ENCODE measurements at regions of chr3 and their contacts with region 1.

Region 1: GRCh38 chr3:48400824-48401433 is 28.9 kb downstream of the FBXW12 start:
- DNase-seq: peak; percentile 90
- H3K4me3 Mint-ChIP-seq: peak overlapping the region; percentile 46
- H3K27ac Mint-ChIP-seq: peak overlapping the region; percentile 95
- H3K4me1 Mint-ChIP-seq: peaks cover 34% of the 10 kb centered on the region
- H3K27me3 Mint-ChIP-seq: no peaks in the 10 kb centered on the region
- CTCF ChIP-seq: peak; percentile 96

Region 2: DNA sequence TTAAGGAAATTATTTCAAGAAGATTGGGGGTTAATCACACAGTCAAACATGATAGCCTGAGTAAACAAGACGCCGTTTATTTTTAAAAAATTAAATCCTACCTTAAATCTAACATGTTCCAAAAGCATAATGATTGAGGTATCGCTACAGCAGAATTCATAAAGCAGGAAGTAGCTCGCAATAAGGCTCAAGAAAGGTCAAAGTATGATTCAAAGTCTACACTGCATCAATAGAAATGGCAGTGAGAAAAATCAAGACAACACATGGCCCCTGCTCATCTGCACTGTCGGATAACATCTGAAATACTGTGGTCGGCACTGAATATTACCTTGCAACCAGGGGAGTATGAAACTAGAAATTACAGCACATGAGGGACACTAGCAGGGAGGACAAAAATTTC is 712.4 kb before region 1 on chr3:
- CTCF ChIA-PET with region 1: no interaction called
- POLR2A ChIA-PET with region 1: no interaction called
- intact Hi-C with region 1: no loop called
- DNase-seq: no peak
- H3K4me3 Mint-ChIP-seq: no peak overlapping the region
- H3K27ac Mint-ChIP-seq: no peak overlapping the region
- H3K4me1 Mint-ChIP-seq: no peaks in the 10 kb centered on the region
- H3K27me3 Mint-ChIP-seq: no peaks in the 10 kb centered on the region
- CTCF ChIP-seq: no peak

Region 3: DNA sequence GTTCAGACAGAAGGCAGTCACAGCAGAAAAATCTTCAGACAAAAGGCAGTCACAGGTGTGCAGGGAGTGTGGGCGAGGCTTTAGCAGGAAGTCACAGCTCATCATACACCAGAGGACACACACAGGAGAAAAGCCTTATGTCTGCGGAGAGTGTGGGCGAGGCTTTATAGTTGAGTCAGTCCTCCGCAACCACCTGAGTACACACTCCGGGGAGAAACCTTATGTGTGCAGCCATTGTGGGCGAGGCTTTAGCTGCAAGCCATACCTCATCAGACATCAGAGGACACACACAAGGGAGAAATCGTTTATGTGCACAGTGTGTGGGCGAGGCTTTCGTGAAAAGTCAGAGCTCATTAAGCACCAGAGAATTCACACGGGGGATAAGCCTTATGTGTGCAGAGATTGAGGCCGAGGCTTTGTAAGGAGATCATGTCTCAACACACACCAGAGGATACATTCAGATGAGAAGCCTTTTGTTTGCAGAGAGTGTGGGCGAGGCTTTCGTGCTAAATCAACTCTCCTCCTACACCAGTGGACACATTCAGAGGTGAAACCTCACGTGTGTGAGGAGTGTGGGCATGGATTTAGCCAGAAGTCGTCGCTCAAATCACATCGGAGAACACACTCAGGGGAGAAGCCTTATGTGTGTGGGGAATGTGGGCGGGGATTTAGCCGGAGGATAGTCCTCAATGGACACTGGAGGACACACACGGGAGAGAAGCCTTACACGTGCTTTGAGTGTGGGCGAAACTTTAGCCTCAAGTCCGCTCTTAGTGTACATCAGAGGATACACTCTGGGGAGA is 132.3 kb before region 1 on chr3:
- CTCF ChIA-PET with region 1: interaction called, 20 read pairs
- POLR2A ChIA-PET with region 1: interaction called, 11 read pairs
- intact Hi-C with region 1: loop called (anchors 2 kb)
- DNase-seq: peak; percentile 86
- H3K4me3 Mint-ChIP-seq: peak overlapping the region; percentile 69
- H3K27ac Mint-ChIP-seq: peak overlapping the region; percentile 83
- H3K4me1 Mint-ChIP-seq: peaks cover 29% of the 10 kb centered on the region
- H3K27me3 Mint-ChIP-seq: no peaks in the 10 kb centered on the region
- CTCF ChIP-seq: no peak

Region 4: GRCh38 chr3:48285132-48285531 is 115.8 kb before region 1 on chr3:
- CTCF ChIA-PET with region 1: interaction called, 10 read pairs
- POLR2A ChIA-PET with region 1: interaction called, 4 read pairs
- intact Hi-C with region 1: no loop called
- DNase-seq: no peak
- H3K4me3 Mint-ChIP-seq: no peak overlapping the region
- H3K27ac Mint-ChIP-seq: no peak overlapping the region
- H3K4me1 Mint-ChIP-seq: no peaks in the 10 kb centered on the region
- H3K27me3 Mint-ChIP-seq: no peaks in the 10 kb centered on the region
- CTCF ChIP-seq: no peak

Region 5: DNA sequence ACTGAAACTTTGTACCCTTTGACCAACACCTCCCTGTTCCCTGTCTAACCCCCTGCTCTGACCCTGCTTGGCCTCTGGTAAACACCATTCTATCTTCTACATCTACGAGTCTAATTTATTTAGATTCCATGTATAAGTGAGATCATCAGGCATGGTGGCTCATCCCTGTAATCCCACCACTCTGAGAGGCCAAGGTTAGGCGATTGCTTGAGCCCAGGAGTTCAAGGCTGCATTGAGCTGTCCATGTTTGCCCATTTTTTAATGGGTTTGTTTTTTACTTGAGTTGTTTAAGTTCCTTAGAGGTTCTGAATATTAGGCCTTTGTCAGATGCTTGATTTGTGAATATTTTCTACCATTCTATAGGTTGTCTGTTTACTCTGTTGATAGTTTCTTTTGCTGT is 12.0 kb before region 1 on chr3:
- CTCF ChIA-PET with region 1: interaction called, 10 read pairs
- POLR2A ChIA-PET with region 1: interaction called, 7 read pairs
- intact Hi-C with region 1: no loop called
- DNase-seq: no peak
- H3K4me3 Mint-ChIP-seq: no peak overlapping the region
- H3K27ac Mint-ChIP-seq: no peak overlapping the region
- H3K4me1 Mint-ChIP-seq: no peaks in the 10 kb centered on the region
- H3K27me3 Mint-ChIP-seq: peaks cover 24% of the 10 kb centered on the region
- CTCF ChIP-seq: no peak

Region 6: GRCh38 chr3:48422270-48422669 is 21.3 kb after region 1 on chr3:
- CTCF ChIA-PET with region 1: interaction called, 29 read pairs
- POLR2A ChIA-PET with region 1: interaction called, 749 read pairs
- intact Hi-C with region 1: no loop called
- DNase-seq: no peak
- H3K4me3 Mint-ChIP-seq: no peak overlapping the region
- H3K27ac Mint-ChIP-seq: no peak overlapping the region
- H3K4me1 Mint-ChIP-seq: peaks cover 30% of the 10 kb centered on the region
- H3K27me3 Mint-ChIP-seq: no peaks in the 10 kb centered on the region
- CTCF ChIP-seq: no peak

Region 7: DNA sequence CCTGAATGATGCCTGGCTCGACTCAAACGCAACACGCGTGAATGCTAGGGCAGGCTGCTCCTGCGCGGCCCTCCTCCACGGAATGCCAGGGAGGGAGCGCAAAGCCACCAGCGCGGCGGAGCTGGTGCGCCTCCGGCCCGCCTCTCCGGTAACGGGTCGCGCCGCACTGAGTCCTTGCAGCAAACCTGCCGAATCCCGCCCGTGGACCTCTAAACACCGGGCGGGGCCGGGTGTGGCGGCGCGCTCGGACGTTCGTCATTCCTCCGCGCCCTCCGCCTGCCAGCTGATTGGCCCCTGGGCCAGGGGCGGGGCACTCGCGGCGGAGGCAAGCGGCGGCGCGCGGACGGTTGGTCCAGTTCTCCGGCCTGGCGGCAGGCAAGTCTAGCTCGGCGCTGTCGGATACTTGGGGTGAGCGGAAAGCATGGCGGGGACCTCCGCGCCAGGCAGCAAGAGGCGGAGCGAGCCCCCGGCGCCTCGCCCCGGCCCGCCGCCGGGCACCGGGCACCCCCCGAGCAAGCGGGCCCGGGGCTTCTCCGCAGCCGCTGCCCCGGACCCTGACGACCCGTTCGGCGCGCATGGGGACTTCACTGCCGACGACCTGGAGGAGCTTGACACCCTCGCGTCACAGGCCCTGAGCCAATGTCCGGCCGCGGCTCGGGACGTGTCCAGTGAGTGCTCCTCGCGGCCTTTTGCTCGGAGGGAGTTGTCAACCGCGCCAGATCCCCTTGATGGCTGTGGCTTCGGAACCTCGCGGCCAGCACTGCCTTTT is 45.7 kb after region 1 on chr3 and contains the start of gene ATRIP:
- CTCF ChIA-PET with region 1: interaction called, 647 read pairs
- POLR2A ChIA-PET with region 1: interaction called, 31 read pairs
- intact Hi-C with region 1: no loop called
- DNase-seq: peak; percentile 87
- H3K4me3 Mint-ChIP-seq: peak within 1 kb of the TSS; percentile 96
- H3K27ac Mint-ChIP-seq: peak within 1 kb of the TSS; percentile 73
- H3K4me1 Mint-ChIP-seq: peaks cover 25% of the 10 kb centered on the region
- H3K27me3 Mint-ChIP-seq: no peaks in the 10 kb centered on the region
- CTCF ChIP-seq: no peak
- total RNA-seq, gene ATRIP: 8.6 and 9.1 TPM in 2 replicates